Vagina (tissue), 2 donors: ENCODE measurements at regions of chr19 and their contacts with region 1.

Region 1: DNA sequence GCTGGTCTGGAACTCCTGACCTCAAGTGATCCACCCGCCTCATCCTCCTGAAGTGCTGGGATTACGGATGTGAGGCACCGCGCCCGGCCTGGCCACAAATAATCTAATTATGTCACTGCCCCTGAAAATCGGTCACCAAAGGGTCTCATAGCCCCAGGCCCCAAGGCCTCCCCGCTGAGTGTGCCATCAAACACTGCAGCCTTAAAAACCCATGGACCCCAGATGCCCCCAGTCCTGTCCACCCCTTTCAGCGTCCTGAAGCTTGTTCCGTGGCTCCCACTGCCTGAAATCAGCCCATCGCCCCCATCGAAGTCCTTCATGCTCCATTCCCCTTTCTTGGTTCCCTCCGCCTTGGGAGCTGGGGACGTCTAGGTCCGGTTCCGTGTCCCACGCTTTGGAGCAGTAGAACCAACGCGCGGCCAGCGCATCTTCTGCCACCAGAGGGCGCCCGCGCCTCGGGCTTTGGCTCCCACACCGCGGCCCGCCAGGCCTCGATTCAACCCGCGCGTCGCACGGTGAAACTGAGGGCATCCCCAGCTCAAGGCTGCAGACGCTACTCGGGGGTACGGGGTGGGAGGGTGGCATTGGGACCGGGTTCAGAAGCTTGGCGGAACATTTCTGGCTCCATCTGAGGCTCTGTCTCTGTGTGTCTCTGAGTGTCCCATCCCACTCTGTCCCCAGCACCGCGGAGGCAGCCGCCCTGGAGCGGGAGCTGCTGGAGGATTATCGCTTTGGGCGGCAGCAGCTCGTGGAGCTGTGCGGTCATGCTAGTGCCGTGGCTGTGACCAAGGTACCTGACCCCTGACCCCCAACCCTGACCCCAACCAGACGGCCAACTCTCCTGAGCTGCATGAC is 3.5 kb downstream of the YJEFN3 start:
- DNase-seq: no peak
- H3K4me3 ChIP-seq: no peak overlapping the region
- H3K27ac ChIP-seq: no peak overlapping the region
- H3K4me1 ChIP-seq: peaks cover 17% of the 10 kb centered on the region
- H3K27me3 ChIP-seq: no peaks in the 10 kb centered on the region
- CTCF ChIP-seq: peak; percentile 81 to 91 (median 85)
- POLR2A ChIP-seq: no peak

Region 2: GRCh38 chr19:19444681-19445155 is 87.5 kb before region 1 on chr19:
- intact Hi-C with region 1: no loop called
- DNase-seq: no peak
- H3K4me3 ChIP-seq: no peak overlapping the region
- H3K27ac ChIP-seq: peak overlapping the region; percentile 40
- H3K4me1 ChIP-seq: peaks cover 40% of the 10 kb centered on the region
- H3K27me3 ChIP-seq: no peaks in the 10 kb centered on the region
- CTCF ChIP-seq: no peak
- POLR2A ChIP-seq: no peak

Region 3: DNA sequence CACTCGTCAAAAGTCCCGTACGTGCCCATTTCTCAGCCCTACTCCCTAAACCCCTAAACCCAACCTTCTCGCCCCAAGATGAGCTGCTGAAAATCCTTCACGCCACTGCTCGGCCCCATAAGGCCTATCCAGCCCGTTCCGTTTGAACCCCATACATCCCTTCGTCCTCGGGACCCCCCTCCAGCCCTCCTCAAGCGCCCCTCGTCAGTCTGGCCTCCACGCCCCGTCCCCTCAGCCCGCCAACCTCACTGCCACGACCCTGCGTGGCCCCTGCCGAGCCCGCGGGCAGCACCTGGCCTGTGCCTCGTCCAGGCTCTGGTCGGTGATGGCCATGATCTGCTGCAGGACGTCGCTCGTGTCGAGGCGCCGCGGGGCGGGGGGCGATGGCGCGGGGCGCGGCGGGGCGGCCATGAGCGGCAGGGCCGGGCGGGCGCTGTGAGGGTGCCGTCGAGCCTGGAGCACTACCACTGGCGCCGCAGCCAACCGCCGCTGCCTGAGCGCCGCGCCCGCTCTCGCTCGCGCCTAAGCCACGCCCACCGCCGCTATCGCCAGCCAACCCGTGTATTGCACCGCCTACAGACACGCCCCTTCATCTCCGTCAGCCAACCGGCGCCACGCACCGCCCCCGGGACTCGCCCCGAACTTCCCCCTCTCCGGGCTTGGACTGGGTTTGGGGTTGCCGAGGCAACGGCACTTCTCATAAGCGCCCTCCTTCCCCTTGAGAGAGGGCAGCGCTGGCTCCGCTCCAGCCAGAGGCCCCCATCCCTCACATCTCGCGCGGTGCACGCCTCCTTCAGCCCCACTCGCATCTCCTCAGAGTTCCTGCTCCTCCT is 86.3 kb after region 1 on chr19 and contains the start of gene PBX4:
- intact Hi-C with region 1: no loop called
- DNase-seq: no peak
- H3K4me3 ChIP-seq: peak within 1 kb of the TSS; percentile 40 to 45
- H3K27ac ChIP-seq: no peak within 1 kb of the TSS
- H3K4me1 ChIP-seq: peaks cover 7% of the 10 kb centered on the region
- H3K27me3 ChIP-seq: no peaks in the 10 kb centered on the region
- CTCF ChIP-seq: no peak
- POLR2A ChIP-seq: no peak
- total RNA-seq, gene PBX4: 5.2 TPM

Region 4: DNA sequence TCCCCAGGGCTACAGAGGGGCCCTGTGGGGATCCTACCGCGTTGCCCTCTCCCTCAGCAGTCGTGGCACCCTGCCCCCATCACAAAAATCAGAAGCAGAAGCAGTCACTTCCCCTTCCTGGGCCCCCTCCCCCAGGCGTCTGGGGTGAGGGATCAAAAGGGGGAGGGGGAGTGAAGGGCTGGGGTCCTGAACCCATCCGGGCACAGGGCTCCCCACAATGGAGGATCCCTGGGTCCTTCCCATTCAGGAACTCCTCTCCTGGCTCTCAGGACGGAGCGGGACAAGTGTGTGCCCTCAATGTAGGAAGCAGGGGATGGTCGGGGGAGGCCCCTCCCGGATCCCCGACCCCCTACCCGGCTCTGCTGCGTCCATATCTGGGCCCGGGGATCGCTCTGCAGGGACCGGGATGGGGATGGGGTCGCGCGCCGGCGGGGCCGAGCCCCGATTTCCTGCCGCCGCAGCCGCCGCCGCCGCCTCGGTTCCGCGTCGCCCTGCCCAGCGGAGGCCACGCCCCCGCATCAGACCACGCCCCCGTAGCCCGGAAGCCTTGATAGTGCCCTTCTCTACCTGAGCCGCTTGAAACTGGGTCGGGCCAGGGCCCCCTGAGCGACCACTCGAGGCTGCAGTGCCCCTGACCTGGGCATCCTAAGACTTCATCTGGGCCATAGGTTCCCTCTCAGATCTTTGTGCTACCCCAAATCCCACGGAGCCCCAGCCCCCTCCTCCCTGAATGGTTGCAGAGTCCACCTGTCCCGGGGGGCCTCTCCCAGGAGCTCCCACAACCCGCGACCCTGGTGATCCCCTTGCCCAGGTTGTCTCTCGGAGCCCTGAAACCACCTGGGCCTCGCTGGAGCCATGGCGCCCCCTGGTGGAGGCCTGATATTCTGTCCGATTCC is 111.2 kb after region 1 on chr19 and contains the start of gene GMIP:
- intact Hi-C with region 1: loop called (anchors 5 kb)
- DNase-seq: no peak
- H3K4me3 ChIP-seq: peak within 1 kb of the TSS; percentile 76 to 80
- H3K27ac ChIP-seq: peak within 1 kb of the TSS; percentile 75
- H3K4me1 ChIP-seq: peaks cover 9% of the 10 kb centered on the region
- H3K27me3 ChIP-seq: no peaks in the 10 kb centered on the region
- CTCF ChIP-seq: peak; percentile 35 to 87 (median 82)
- POLR2A ChIP-seq: peak in 1 of 2 donors; percentile 20
- total RNA-seq, gene GMIP: 12.3 TPM

Region 5: DNA sequence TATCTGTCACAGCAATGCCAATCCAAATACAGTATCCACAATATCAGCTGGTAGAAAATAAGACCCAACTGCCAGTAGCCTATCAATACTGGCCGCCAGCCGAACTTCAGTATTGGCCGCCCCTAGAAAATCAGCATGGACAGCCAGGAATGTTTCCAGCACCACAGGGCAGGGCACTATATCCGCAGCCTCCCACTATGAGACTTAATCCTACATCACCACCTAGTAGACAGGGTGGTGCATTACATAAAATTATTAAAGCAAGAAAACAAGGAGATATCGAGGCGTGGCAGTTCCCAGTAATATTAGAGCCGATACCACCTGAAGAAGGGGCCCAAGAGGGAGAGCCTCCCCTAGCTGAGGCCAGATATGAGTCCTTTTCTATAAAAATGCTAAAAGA is 746.2 kb after region 1 on chr19:
- intact Hi-C with region 1: loop called (anchors 10 kb)
- DNase-seq: no peak
- H3K4me3 ChIP-seq: no peak overlapping the region
- H3K27ac ChIP-seq: no peak overlapping the region
- H3K4me1 ChIP-seq: peaks cover 10% of the 10 kb centered on the region
- H3K27me3 ChIP-seq: no peaks in the 10 kb centered on the region
- CTCF ChIP-seq: peak in 2 of 3 experiments; percentile 16 to 68
- POLR2A ChIP-seq: no peak